ENCODE measurements at regions of chr1 and their contacts with region 1.

Region 1: DNA sequence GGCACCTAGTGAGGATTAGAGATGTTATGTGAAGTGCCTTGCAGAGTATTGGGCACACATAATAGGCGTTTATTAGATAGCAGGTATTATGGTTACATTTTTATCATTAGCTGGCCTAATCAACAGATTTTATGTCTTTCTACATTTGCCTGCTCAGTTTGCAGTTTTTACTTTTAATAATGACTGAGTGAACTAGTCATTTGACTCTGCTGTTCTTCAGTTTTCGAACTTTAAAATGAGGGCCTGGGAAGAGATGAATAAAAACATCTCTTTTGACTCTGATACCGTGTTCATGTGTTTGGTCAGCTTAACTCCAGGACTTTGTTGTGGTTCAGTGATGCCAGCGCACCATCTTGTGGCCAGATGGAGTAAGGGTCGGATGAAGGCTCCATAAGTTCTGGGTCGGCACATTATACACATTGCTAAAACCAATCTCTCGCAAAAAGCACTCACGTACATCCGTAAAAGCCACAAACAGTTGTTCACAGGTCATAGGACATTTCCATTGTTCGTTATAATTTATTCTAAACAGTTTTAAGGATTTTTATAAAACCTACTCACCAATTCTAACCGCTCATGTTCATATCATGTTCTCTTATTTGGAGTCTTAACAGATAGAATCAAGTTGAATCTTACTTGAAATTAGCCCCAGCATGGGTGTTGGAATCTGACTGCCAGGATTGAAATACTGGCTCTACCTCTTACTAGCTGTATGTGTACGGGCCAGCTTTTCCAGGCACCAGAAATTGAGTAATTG is 78.4 kb upstream of the GPR88 start:
- DNase-seq: peak; percentile 58
- CTCF ChIP-seq: peak; percentile 86

Region 2: DNA sequence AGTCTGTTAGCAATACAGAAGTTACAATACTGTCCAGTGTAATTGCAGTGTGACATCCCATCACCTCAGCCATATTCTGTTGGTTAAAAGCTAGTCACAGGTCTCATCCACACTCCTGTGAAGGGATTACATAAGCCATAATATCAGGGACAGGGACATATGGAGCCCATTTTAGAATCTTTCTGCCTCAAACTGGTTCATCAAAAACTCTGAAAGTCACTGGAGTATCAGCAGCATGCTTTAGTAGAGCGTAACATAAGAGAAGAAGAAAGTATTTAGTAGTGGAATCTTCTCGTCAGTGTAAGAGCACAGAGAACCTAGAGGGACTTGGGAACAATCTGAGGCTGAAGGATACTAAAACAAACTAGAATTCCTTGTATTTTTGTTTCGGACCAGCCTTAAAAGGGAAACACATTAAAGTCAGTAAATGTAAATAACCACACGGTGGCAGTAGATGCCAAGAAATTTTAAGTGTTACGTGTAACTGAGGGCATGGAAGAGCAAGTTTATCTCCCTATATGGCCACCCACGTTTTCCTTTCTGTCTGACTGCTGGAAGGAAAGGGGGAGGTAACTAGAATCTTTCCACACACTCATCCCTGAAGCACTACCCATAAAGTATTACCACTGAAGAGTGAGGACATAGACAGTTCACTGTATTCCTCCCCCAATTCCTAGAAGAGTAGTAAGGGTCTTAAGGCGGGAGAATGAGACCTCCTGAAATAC is 651.0 kb before region 1 on chr1:
- CTCF ChIA-PET with region 1: interaction called, 16 read pairs
- POLR2A ChIA-PET with region 1: no interaction called
- DNase-seq: peak; percentile 66
- CTCF ChIP-seq: peak; percentile 43

Region 3: DNA sequence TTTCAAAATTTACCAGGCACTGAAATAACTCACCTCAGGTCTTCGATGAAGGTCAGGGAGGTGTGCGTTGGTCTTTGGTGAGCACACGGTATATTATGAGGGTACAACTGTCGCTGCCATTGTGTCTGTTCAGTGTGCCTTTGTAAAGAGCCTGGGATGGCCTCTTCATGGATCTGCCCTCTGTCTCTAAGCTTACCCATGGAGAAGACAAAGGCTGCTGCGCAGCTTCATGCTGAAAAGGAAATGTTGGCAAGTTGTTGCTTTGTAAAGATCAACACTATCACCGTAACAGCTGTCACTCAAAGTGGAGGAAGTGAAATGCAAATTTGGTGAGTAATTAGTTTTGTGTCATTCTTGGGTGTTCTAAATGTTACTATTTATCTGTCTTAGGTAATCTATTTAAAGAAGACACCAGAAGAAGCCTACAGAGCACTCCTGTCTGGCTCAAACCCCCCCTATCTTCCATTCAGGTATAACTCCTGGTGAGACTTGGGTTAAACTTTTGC is 35.7 kb before region 1 on chr1:
- CTCF ChIA-PET with region 1: interaction called, 14 read pairs
- POLR2A ChIA-PET with region 1: no interaction called
- DNase-seq: peak; percentile 18
- CTCF ChIP-seq: no peak

Region 4: GRCh38 chr1:100443811-100444571 is 15.5 kb before region 1 on chr1:
- CTCF ChIA-PET with region 1: interaction called, 50 read pairs
- POLR2A ChIA-PET with region 1: no interaction called
- DNase-seq: no peak
- CTCF ChIP-seq: no peak

Region 5: DNA sequence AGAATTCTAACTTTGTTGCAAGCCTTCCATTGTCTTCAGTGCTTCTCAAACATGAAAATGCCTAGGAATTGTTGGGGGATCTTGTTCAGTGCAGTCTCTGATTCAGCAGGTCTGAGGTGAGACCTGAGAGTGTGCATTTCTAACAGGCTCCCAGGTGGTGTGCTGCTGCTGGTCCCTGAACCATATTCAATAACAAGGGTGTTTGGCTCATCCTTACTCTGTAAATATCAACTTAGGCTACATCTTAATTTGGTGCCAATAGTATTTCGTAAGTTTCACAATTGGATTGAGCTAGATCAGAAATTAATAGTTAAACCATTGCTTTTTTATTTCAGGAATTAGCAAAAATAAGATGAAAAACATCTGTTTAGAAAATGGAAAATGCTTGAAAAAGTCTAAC is 19.3 kb after region 1 on chr1:
- CTCF ChIA-PET with region 1: interaction called, 12 read pairs
- POLR2A ChIA-PET with region 1: no interaction called
- DNase-seq: no peak
- CTCF ChIP-seq: no peak

Region 6: GRCh38 chr1:100866041-100866900 is 406.7 kb after region 1 on chr1:
- CTCF ChIA-PET with region 1: interaction called, 81 read pairs
- POLR2A ChIA-PET with region 1: interaction called, 4 read pairs
- DNase-seq: peak; percentile 19
- CTCF ChIP-seq: peak; percentile 47